ENCODE measurements at regions of chr22 and their contacts with region 1.

Region 1: GRCh38 chr22:36239401-36240171 is at the start of gene APOL2:
- DNase-seq: peak; percentile 75 to 94 (median 85)
- H3K4me3 ChIP-seq: peak within 1 kb of the TSS; percentile 59 to 76
- H3K4me3 Mint-ChIP-seq: peak within 1 kb of the TSS; percentile 96 to 100 (median 99)
- H3K27ac ChIP-seq: peak within 1 kb of the TSS; percentile 81
- H3K27ac Mint-ChIP-seq: peak within 1 kb of the TSS; percentile 86 to 99 (median 97)
- H3K4me1 ChIP-seq: peaks cover 42% of the 10 kb centered on the region
- H3K4me1 Mint-ChIP-seq: peaks cover 39 to 55% (median 47%) of the 10 kb centered on the region in 4 donors
- H3K27me3 ChIP-seq: no peaks in the 10 kb centered on the region
- H3K27me3 Mint-ChIP-seq: no peaks in the 10 kb centered on the region
- total RNA-seq, gene APOL2: 96.4 to 103 TPM

Region 2: DNA sequence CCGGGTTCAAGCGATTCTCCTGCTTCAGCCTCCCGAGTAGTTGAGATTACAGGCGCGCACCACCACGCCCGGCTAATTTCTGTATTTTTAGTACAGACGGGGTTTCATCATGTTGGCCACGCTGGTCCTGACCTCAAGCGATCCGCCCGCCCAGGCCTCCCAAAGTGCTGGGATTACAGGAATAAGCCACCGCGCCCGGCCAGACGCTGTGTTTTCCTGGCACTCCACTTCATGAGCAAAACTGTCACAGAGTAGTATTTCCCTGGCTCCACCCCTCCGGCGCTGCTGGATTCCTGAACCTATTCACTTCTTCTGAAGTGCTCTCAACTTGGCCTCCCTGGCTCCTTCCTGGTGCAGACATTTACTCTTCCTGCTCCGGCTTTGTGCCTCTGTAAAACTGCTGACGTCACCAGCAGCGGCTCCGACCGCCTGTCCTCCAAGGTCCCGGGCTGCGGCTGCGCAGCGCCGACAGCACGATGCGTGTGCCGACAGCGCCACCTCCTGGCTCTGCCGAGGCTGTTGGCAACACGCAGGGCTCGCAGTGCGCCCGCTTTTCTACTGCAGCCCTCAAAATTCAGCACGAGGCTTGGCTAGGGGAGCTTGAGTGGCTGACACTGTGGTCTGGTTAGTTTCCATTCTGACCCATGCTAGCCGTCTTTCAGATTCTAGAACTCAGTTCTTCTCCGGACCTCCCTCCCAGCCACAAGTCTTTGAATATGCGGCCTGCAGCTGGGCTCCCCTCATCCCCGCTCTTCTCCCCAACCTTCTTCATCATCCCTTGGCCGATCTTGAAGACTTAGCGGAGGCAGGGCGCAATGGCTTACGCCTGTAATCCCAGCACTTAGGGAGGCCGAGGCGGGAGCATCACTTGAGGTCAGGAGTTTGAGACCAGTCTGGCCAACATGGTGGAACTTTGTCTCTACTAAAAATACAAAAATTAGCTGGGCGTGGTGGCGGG is 115.6 kb before region 1 on chr22:
- CTCF ChIA-PET with region 1: no interaction called
- POLR2A ChIA-PET with region 1: no interaction called
- intact Hi-C with region 1: no loop called
- DNase-seq: peak; percentile 90 to 93 (median 92)
- H3K4me3 ChIP-seq: peak overlapping the region in 1 of 2 donors; percentile 59
- H3K4me3 Mint-ChIP-seq: peak overlapping the region; percentile 72 to 84 (median 80)
- H3K27ac ChIP-seq: peak overlapping the region; percentile 37
- H3K27ac Mint-ChIP-seq: peak overlapping the region; percentile 66 to 98 (median 93)
- H3K4me1 ChIP-seq: peaks cover 11% of the 10 kb centered on the region
- H3K4me1 Mint-ChIP-seq: peaks cover 3 to 18% (median 9%) of the 10 kb centered on the region in 4 donors
- H3K27me3 ChIP-seq: no peaks in the 10 kb centered on the region
- H3K27me3 Mint-ChIP-seq: no peaks in the 10 kb centered on the region

Region 3: DNA sequence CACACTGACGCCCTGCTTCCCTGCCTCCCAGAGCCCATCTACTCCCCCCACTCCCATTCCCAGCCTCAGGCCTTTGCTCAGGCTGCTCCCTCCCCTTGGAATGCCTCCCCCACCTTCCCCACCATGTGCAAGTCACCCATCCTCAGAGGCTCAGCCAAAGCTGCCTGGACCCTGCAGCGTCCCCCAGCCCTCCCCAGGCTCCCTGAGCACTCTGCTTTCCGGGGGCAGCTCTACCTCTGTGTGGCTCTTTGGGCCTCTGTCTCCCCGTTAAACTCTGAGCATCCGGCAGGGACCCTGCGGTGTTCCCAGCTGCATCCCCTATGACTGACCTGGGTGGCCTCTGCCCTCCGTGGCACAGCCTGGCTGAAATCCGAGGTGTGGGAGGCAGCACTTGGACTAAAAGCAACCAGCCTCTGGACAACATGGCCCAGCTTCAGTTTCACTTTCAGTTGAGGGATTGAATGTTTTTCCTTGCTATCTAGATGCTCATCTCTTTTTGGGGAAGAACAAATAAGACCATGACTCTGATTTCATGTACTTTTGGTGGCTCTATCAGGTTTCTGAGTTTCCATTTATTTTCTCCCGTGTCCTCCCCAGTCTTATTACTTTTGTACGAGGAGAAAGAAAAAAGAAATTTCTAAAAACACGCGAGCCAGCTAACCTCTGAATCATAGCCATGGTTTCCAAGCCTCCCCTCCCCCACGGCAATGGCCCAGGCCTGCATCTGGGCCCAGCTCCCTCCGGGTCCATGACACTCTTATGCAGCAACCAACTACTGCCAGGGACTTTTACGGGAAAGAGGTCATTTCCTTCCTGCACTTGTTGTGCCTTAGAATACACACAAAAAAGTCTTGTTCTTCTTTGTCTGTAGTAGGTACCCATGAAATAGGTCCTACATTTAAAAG is 82.8 kb before region 1 on chr22:
- CTCF ChIA-PET with region 1: interaction called, 8 read pairs
- POLR2A ChIA-PET with region 1: interaction called, 8 read pairs
- intact Hi-C with region 1: loop called (anchors 5 kb)
- DNase-seq: peak; percentile 67 to 91 (median 69)
- H3K4me3 ChIP-seq: peak overlapping the region; percentile 50 to 75
- H3K4me3 Mint-ChIP-seq: peak overlapping the region; percentile 90 to 99 (median 92)
- H3K27ac ChIP-seq: peak overlapping the region; percentile 95
- H3K27ac Mint-ChIP-seq: peak overlapping the region; percentile 92 to 98 (median 97)
- H3K4me1 ChIP-seq: peaks cover 81% of the 10 kb centered on the region
- H3K4me1 Mint-ChIP-seq: peaks cover 71 to 99% (median 87%) of the 10 kb centered on the region in 4 donors
- H3K27me3 ChIP-seq: no peaks in the 10 kb centered on the region
- H3K27me3 Mint-ChIP-seq: no peaks in the 10 kb centered on the region

Region 4: DNA sequence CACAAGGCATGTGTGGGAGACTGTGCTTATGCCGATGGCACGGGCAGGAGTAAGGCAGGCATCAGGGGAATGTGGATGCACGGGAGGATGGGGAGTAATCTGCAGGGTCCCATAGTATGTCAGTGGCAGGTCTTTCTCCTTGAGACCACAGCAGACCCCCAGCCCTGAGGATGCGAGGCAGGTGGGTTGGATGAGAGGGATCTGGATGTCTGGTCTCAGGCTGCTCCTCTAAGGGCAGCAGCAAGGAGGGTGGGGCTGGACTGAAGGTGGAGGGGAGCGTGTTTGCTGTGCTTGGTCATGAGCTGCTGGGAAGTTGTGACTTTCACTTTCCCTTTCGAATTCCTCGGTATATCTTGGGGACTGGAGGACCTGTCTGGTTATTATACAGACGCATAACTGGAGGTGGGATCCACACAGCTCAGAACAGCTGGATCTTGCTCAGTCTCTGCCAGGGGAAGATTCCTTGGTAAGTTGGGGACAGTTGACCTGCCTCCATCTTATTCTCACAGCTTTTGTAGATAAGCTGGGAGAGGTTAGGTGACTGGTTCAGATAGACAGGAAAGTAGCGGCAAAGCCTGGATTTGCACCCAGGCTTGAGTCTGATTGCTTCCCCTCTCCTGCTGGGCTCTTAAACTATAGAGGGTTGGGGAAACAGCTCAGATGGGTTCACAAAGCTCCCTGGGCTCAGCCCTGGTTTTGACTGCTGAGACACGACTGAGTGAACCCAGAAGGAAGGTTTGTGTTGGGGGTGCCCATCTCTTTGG is 13.3 kb after region 1 on chr22 and contains the start of gene APOL1:
- CTCF ChIA-PET with region 1: interaction called, 47 read pairs
- POLR2A ChIA-PET with region 1: interaction called, 44 read pairs
- intact Hi-C with region 1: loop called (anchors 1 kb)
- DNase-seq: peak; percentile 59 to 70 (median 64)
- H3K4me3 ChIP-seq: peak within 1 kb of the TSS; percentile 36 to 56
- H3K4me3 Mint-ChIP-seq: peak within 1 kb of the TSS; percentile 95 to 99 (median 97)
- H3K27ac ChIP-seq: peak within 1 kb of the TSS; percentile 73
- H3K27ac Mint-ChIP-seq: peak within 1 kb of the TSS; percentile 85 to 97 (median 95)
- H3K4me1 ChIP-seq: peaks cover 38% of the 10 kb centered on the region
- H3K4me1 Mint-ChIP-seq: peaks cover 30 to 65% (median 42%) of the 10 kb centered on the region in 4 donors
- H3K27me3 ChIP-seq: no peaks in the 10 kb centered on the region
- H3K27me3 Mint-ChIP-seq: no peaks in the 10 kb centered on the region
- total RNA-seq, gene APOL1: 27.5 to 31.2 TPM

Region 5: GRCh38 chr22:36277482-36278291 is 38.1 kb after region 1 on chr22:
- CTCF ChIA-PET with region 1: interaction called, 45 read pairs
- POLR2A ChIA-PET with region 1: interaction called, 12 read pairs
- intact Hi-C with region 1: loop called (anchors 1 kb)
- DNase-seq: peak; percentile 53 to 75 (median 59)
- H3K4me3 ChIP-seq: no peak overlapping the region
- H3K4me3 Mint-ChIP-seq: peak overlapping the region in 1 of 8 donors; percentile 59
- H3K27ac ChIP-seq: no peak overlapping the region
- H3K27ac Mint-ChIP-seq: peak overlapping the region in 6 of 7 donors; percentile 50 to 88 (median 79)
- H3K4me1 ChIP-seq: peaks cover 15% of the 10 kb centered on the region
- H3K4me1 Mint-ChIP-seq: peaks cover 12 to 25% (median 17%) of the 10 kb centered on the region in 4 donors
- H3K27me3 ChIP-seq: no peaks in the 10 kb centered on the region
- H3K27me3 Mint-ChIP-seq: no peaks in the 10 kb centered on the region

Region 6: GRCh38 chr22:36486619-36487384 is 247.2 kb after region 1 on chr22:
- CTCF ChIA-PET with region 1: interaction called, 16 read pairs
- POLR2A ChIA-PET with region 1: interaction called, 17 read pairs
- intact Hi-C with region 1: loop called (anchors 5 kb)
- DNase-seq: peak; percentile 61 to 72 (median 63)
- H3K4me3 ChIP-seq: no peak overlapping the region
- H3K4me3 Mint-ChIP-seq: no peak overlapping the region
- H3K27ac ChIP-seq: no peak overlapping the region
- H3K27ac Mint-ChIP-seq: peak overlapping the region in 3 of 7 donors; percentile 43 to 65 (median 64)
- H3K4me1 ChIP-seq: peaks cover 5% of the 10 kb centered on the region
- H3K4me1 Mint-ChIP-seq: peaks cover 4 to 12% (median 5%) of the 10 kb centered on the region in 4 donors
- H3K27me3 ChIP-seq: no peaks in the 10 kb centered on the region
- H3K27me3 Mint-ChIP-seq: no peaks in the 10 kb centered on the region

Region 7: GRCh38 chr22:36702842-36703215 is 463.2 kb after region 1 on chr22:
- CTCF ChIA-PET with region 1: no interaction called
- POLR2A ChIA-PET with region 1: no interaction called
- intact Hi-C with region 1: no loop called
- DNase-seq: no peak
- H3K4me3 ChIP-seq: no peak overlapping the region
- H3K4me3 Mint-ChIP-seq: peak overlapping the region in 2 of 8 donors; percentile 4 to 36
- H3K27ac ChIP-seq: no peak overlapping the region
- H3K27ac Mint-ChIP-seq: no peak overlapping the region
- H3K4me1 ChIP-seq: no peaks in the 10 kb centered on the region
- H3K4me1 Mint-ChIP-seq: peaks cover 4 to 10% (median 8%) of the 10 kb centered on the region in 4 donors
- H3K27me3 ChIP-seq: peaks cover 9% of the 10 kb centered on the region
- H3K27me3 Mint-ChIP-seq: peaks cover 52 to 69% of the 10 kb centered on the region in 2 donors